GM12878 (cell line): ENCODE measurements at regions of chrX and their contacts with region 1.

Region 1: DNA sequence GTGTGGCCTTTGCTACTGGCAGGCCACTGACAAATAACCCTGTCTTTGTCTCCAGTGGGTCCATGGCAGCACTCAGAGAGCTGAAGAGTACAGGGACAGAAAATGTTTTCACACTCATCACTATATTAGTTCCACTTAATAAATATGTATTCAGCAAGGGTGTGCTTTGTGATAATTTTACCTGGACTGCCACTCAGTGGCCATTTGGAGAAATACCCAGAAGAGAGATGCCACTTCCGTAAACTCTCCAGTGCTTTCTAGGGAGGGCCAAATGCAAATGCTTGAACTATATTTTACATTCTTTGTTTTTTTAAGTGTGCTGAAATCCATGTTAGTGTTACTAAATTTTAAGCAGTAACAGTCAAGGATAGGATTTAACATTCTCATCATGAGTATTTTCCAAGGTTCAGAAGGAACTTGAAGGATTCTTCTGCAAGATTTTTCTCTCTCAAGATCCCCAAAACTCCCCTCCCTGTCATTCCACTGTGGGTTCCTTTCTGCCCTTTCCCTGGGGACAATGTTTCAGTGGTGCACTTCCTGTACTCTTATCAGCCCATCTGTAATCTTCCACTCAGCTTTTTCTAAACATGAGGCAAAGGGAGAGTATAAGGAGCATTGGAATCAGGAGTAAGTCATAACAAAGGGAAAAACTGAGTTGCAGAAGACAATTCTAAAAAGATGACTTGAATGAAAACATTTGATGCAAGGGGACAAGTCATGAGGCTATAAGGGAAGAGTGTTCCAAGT is 46.0 kb downstream of the TFDP3 start:
- DNase-seq: no peak
- ATAC-seq: peak; percentile 89
- H3K4me3 ChIP-seq: no peak overlapping the region
- H3K27ac ChIP-seq: no peak overlapping the region
- H3K4me1 ChIP-seq: no peaks in the 10 kb centered on the region
- H3K27me3 ChIP-seq: no peaks in the 10 kb centered on the region
- CTCF ChIP-seq: peak; percentile 37 to 46 (median 41); a peak in 5 of 6 replicates
- EP300 ChIP-seq: no peak
- POLR2A ChIP-seq: no peak
- RAD21 ChIP-seq: peak; percentile 47

Region 2: DNA sequence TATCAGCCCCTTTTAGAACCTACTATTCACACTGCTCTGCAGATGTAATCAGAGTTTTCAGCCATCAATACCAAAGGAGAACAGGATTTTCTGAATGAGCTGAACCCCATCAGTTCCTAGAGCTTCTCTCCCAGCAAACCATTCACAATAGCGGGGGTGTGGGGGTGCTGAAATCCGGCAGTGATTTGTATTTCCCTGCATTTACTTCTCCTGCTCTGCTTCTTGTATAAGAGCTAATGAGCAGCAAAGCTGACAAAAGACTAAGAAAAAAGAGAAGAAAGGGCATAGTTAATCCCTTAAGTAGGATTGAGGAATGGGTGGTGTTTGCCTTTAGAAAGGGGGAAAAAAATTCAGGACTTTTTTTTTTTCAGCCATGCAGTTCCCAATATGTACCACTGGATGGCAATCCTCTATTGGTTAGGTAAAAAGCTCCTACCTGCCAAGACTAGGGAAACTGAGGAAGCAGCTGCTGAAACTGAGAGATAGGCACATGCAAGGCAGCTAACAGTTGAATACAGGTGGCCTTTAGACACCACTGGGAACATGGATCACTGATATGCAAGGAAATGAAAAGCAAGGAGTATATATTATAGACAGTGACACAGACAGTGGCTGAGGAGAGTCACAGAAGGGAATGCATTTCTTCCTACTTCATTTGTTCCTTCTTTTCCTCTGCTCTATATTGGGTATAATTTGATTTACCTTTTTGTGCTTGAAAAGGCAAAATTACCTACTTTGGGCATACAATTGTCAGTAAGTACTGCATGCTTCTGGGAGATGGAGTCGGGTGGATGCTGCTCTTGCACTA is 431.6 kb before region 1 on chrX:
- CTCF ChIA-PET with region 1: interaction called, 3 read pairs
- POLR2A ChIA-PET with region 1: no interaction called
- RAD21 ChIA-PET with region 1: no interaction called
- SMC1A ChIA-PET with region 1: no interaction called
- in situ Hi-C with region 1: no loop called
- intact Hi-C with region 1: loop called (anchors 5 kb)
- DNase-seq: no peak
- ATAC-seq: no peak
- H3K4me3 ChIP-seq: no peak overlapping the region
- H3K27ac ChIP-seq: no peak overlapping the region
- H3K4me1 ChIP-seq: no peaks in the 10 kb centered on the region
- H3K27me3 ChIP-seq: no peaks in the 10 kb centered on the region
- CTCF ChIP-seq: peak; percentile 39 to 60 (median 53); a peak in 5 of 6 replicates
- EP300 ChIP-seq: no peak
- POLR2A ChIP-seq: no peak
- RAD21 ChIP-seq: peak; percentile 51

Region 3: DNA sequence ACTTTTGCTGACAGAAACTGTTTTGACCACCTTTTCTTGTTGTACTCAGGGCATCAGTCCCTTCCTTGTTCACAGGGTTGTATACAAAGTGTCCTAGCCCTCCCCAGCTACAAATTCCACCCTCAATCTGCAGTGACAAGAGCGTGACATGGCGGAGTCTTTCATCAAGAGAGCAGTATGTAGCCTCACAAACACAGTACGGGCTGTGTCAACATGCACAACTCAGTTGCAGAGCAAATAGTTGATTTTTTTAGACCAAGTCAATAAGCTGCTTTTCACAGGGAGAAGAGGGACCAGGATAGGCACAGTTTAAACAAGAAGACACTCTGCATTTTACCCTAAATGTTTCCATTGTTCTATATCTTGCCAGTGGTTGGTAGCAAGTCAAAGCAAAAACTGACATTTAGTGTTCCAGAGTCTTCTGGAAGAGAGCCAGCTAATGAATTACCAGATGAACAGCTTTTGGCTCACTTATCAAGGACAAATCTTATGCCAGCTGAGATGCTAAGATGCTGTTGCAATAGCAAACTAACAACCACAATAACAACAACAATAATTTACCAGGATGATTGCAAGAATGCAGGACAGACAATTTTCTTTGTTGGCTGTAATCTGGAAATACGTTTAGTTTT is 205.0 kb before region 1 on chrX:
- CTCF ChIA-PET with region 1: no interaction called
- POLR2A ChIA-PET with region 1: no interaction called
- RAD21 ChIA-PET with region 1: no interaction called
- SMC1A ChIA-PET with region 1: no interaction called
- in situ Hi-C with region 1: no loop called
- intact Hi-C with region 1: no loop called
- DNase-seq: no peak
- ATAC-seq: no peak
- H3K4me3 ChIP-seq: no peak overlapping the region
- H3K27ac ChIP-seq: no peak overlapping the region
- H3K4me1 ChIP-seq: no peaks in the 10 kb centered on the region
- H3K27me3 ChIP-seq: no peaks in the 10 kb centered on the region
- CTCF ChIP-seq: no peak
- EP300 ChIP-seq: no peak
- POLR2A ChIP-seq: no peak
- RAD21 ChIP-seq: no peak

Region 4: DNA sequence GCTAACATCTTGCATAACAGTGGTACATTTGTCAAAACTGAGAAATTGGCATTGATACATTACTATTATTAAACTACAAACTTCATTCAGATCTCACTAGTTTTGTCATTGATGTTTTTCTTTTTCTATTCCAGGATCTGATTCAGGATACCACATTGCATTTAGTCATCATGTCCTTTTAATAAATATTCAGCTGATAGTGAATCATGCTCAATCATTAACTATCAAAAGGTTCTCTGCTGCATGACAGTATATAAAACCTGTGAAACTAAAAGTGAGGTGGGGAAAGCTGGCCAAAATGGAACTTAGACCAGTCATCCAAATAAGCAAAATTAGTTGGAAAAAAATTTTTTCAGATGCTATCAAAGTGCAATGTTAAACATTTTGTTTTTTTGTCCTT is 185.6 kb before region 1 on chrX:
- CTCF ChIA-PET with region 1: no interaction called
- POLR2A ChIA-PET with region 1: no interaction called
- RAD21 ChIA-PET with region 1: no interaction called
- SMC1A ChIA-PET with region 1: no interaction called
- in situ Hi-C with region 1: no loop called
- intact Hi-C with region 1: no loop called
- DNase-seq: no peak
- ATAC-seq: no peak
- H3K4me3 ChIP-seq: no peak overlapping the region
- H3K27ac ChIP-seq: no peak overlapping the region
- H3K4me1 ChIP-seq: no peaks in the 10 kb centered on the region
- H3K27me3 ChIP-seq: no peaks in the 10 kb centered on the region; a peak in 1 of 4 replicates
- CTCF ChIP-seq: no peak
- EP300 ChIP-seq: no peak
- POLR2A ChIP-seq: no peak
- RAD21 ChIP-seq: no peak

Region 5: GRCh38 chrX:133005066-133005465 is 167.1 kb before region 1 on chrX:
- CTCF ChIA-PET with region 1: interaction called, 8 read pairs
- POLR2A ChIA-PET with region 1: no interaction called
- RAD21 ChIA-PET with region 1: no interaction called
- SMC1A ChIA-PET with region 1: interaction called, 5 read pairs
- in situ Hi-C with region 1: no loop called
- intact Hi-C with region 1: loop called (anchors 10 kb)
- DNase-seq: no peak
- ATAC-seq: no peak
- H3K4me3 ChIP-seq: no peak overlapping the region
- H3K27ac ChIP-seq: no peak overlapping the region
- H3K4me1 ChIP-seq: no peaks in the 10 kb centered on the region
- H3K27me3 ChIP-seq: no peaks in the 10 kb centered on the region
- CTCF ChIP-seq: peak; percentile 49 to 66 (median 58)
- EP300 ChIP-seq: no peak
- POLR2A ChIP-seq: no peak
- RAD21 ChIP-seq: peak; percentile 60